ENCODE measurements at regions of chr1 and their contacts with region 1.

Region 1: DNA sequence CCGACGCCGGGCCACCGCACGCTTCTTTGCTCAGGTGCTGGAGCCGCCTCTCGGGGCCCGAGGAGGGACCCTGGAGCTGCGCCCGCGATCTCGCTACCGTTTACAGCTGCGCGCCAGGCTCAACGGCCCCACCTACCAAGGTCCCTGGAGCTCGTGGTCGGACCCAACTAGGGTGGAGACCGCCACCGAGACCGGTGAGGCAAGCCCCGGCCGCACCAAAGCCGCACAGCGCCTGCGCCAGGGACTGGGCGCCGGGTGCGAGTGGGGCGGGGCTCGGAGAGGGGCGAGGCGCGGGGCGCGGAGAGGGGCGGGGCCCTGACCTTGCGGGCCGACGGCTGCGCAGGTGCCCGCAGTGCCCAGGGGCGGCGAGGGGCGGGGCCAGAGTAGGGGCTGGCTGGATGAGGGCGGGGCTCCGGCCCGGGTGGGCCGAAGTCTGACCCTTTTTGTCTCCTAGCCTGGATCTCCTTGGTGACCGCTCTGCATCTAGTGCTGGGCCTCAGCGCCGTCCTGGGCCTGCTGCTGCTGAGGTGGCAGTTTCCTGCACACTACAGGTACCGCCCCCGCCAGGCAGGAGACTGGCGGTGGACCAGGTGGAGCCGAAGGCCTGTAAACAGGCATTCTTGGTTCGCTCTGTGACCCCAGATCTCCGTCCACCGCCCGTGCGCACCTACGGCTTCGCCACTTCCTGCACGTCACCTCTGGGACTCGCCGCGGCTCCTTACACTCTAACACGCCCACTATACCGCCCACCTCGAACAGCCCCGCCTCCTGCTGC is 9.8 kb upstream of the CDC20 start:
- DNase-seq: peak; percentile 91
- ATAC-seq: peak; percentile 75
- H3K4me3 ChIP-seq: peak overlapping the region; percentile 70
- H3K27ac ChIP-seq: peak overlapping the region; percentile 88
- H3K4me1 ChIP-seq: peaks cover 40% of the 10 kb centered on the region
- H3K27me3 ChIP-seq: no peaks in the 10 kb centered on the region
- CTCF ChIP-seq: no peak

Region 2: GRCh38 chr1:43067977-43068751 is 280.8 kb before region 1 on chr1:
- CTCF ChIA-PET with region 1: no interaction called
- POLR2A ChIA-PET with region 1: no interaction called
- intact Hi-C with region 1: no loop called
- DNase-seq: no peak
- ATAC-seq: no peak
- H3K4me3 ChIP-seq: no peak overlapping the region
- H3K27ac ChIP-seq: no peak overlapping the region
- H3K4me1 ChIP-seq: no peaks in the 10 kb centered on the region
- H3K27me3 ChIP-seq: no peaks in the 10 kb centered on the region
- CTCF ChIP-seq: no peak

Region 3: GRCh38 chr1:43285269-43285990 is 63.6 kb before region 1 on chr1 and contains the start of gene C1orf210:
- CTCF ChIA-PET with region 1: no interaction called
- POLR2A ChIA-PET with region 1: interaction called, 3 read pairs
- intact Hi-C with region 1: loop called (anchors 5 kb)
- DNase-seq: peak; percentile 90
- ATAC-seq: peak; percentile 90
- H3K4me3 ChIP-seq: peak within 1 kb of the TSS; percentile 61
- H3K27ac ChIP-seq: no peak within 1 kb of the TSS
- H3K4me1 ChIP-seq: peaks cover 16% of the 10 kb centered on the region
- H3K27me3 ChIP-seq: no peaks in the 10 kb centered on the region
- CTCF ChIP-seq: peak; percentile 65
- total RNA-seq, gene C1orf210: 10.4 and 17.8 TPM in 2 replicates

Region 4: DNA sequence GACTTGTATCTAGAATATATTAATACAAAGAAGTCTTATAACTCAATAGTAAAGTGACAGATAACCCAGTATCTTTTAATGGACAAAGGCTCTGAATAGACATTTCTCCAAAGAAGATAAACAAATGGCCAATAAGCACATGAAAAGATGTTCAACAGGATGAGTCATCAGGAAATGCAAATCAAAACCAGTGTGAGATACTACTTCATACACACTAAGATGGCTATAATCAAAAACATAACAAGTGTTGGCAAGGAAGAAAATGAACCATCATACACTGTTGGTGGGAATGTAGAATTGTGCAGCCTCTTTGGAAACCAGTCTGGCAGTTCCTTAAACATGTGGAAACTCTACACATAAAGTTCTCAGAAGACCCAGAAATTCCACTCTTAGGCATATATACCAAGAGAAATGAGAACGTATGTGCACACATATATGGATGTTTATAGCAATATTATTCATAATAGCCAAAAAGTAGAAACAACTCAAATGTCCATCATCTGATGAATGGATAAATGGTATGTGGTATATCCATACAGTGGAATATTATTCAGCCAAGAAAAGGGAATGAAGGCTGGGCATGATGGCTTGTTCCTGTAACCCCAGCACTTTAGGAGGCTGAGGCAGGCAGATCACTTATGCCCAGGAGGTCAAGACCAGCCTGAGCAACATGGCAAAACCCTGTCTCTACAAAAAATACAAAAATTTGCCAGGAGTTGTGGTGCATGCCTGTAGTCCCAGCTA is 21.3 kb before region 1 on chr1:
- CTCF ChIA-PET with region 1: no interaction called
- POLR2A ChIA-PET with region 1: no interaction called
- intact Hi-C with region 1: no loop called
- DNase-seq: no peak
- ATAC-seq: no peak
- H3K4me3 ChIP-seq: no peak overlapping the region
- H3K27ac ChIP-seq: no peak overlapping the region
- H3K4me1 ChIP-seq: peaks cover 8% of the 10 kb centered on the region
- H3K27me3 ChIP-seq: no peaks in the 10 kb centered on the region
- CTCF ChIP-seq: no peak

Region 5: GRCh38 chr1:43358746-43359693 is 10.0 kb after region 1 on chr1 and contains the start of gene CDC20:
- CTCF ChIA-PET with region 1: no interaction called
- POLR2A ChIA-PET with region 1: interaction called, 3 read pairs
- intact Hi-C with region 1: loop called (anchors 1 kb)
- DNase-seq: peak; percentile 99
- ATAC-seq: peak; percentile 94
- H3K4me3 ChIP-seq: peak within 1 kb of the TSS; percentile 93
- H3K27ac ChIP-seq: peak within 1 kb of the TSS; percentile 86
- H3K4me1 ChIP-seq: peaks cover 25% of the 10 kb centered on the region
- H3K27me3 ChIP-seq: no peaks in the 10 kb centered on the region
- CTCF ChIP-seq: no peak
- total RNA-seq, gene CDC20: 312 and 349 TPM in 2 replicates

Region 6: DNA sequence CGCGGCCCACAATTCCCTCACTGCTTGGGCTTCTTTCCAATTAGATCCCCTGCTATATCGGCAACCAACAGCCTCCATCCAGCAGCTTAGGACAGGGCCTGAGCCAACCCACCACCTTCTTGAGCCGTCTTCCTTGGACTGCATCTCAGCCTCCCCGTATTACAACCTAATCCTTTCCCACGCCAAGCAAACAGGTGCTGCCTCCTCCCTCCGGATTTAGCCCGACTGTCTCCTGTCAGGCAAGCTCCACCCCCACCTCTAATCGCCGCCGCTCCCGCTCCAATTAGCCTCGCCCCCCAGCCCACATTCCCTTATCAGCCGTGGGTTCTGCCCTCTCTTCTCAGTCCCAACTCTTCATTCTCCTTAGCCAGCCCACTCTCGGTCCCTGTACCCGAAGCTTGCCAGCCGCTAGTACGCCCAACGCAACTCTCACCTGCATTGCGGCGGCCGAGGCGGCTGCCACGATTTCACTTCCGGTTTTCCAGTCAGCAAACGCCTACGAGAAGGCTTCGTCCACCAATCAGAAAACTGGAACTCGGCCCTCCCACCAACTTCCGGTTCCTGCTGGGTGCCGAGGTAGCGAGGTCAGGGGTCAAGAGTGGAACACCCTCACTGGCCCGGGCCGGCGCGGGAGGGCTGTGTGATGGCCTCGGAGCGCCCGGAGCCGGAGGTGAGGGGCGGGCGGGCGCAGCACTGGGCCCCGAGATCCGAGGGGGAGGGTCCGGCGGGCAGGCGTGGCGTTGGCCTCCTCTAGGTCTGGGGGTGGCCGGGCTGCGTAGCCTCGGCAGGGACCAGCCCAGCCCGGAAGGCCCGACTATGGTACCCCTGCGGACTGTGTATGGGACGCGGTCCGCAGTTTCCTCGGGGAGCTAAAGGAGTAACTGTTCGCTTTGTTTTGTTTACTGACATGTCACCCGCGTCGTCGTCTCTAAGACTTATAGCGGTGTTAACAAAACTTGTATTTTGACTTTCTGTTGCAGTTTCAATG is 40.6 kb after region 1 on chr1 and contains the starts of genes MED8 and SZT2:
- CTCF ChIA-PET with region 1: no interaction called
- POLR2A ChIA-PET with region 1: no interaction called
- intact Hi-C with region 1: loop called (anchors 1 kb)
- DNase-seq: peak; percentile 95
- ATAC-seq: peak; percentile 94
- H3K4me3 ChIP-seq: peak within 1 kb of the TSS; percentile 87
- H3K27ac ChIP-seq: peak within 1 kb of the TSS; percentile 59
- H3K4me1 ChIP-seq: peaks cover 22% of the 10 kb centered on the region
- H3K27me3 ChIP-seq: no peaks in the 10 kb centered on the region
- CTCF ChIP-seq: no peak
- total RNA-seq, gene MED8: 35.5 and 41.8 TPM in 2 replicates
- total RNA-seq, gene SZT2: 22.2 and 31.3 TPM in 2 replicates

Region 7: DNA sequence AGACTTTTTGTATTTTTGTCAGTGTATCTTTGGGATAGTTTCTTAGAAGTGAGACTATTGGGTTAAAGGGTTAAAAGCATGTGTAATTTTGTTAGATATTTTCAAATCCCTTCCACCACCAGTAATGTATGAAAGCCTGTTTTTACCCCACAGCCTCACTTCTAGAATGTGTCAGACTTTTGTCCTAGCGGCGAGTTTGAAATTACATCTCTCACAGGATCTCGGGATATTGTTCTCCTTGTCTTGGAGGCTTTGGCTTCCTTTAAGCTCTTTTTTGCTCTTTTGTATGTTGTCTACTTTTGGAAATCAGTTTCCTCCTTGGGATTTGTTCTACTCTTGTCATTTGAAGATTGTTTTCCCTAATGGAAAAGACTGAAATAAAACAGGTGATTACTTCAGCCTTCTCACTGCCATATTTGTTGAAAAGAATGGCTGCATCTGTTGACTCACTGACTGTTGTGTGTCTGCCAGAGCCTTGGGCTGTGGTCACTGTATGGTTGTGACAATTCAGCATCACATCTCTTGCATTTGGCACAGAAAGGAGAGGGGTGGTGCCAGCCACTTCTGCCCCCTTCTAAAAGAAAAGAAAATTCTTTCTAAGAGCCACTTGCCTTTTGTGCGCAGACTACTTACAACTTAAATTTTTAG is 380.9 kb after region 1 on chr1:
- CTCF ChIA-PET with region 1: no interaction called
- POLR2A ChIA-PET with region 1: no interaction called
- intact Hi-C with region 1: no loop called
- DNase-seq: no peak
- ATAC-seq: no peak
- H3K4me3 ChIP-seq: no peak overlapping the region
- H3K27ac ChIP-seq: no peak overlapping the region
- H3K4me1 ChIP-seq: no peaks in the 10 kb centered on the region
- H3K27me3 ChIP-seq: no peaks in the 10 kb centered on the region
- CTCF ChIP-seq: no peak

Measured in PC-3 (cell line).